Spleen (tissue), 13 donors: ENCODE measurements at regions of chr12 and their contacts with region 1.

Region 1: GRCh38 chr12:97308576-97309198 is 153.9 kb upstream of the RMST start:
- DNase-seq: no peak
- H3K4me3 ChIP-seq: no peak overlapping the region
- H3K27ac ChIP-seq: no peak overlapping the region
- H3K4me1 ChIP-seq: peaks cover 0 to 16% (median 3%) of the 10 kb centered on the region in 6 donors
- H3K27me3 ChIP-seq: peaks cover 0 to 15% (median 0%) of the 10 kb centered on the region in 7 donors
- CTCF ChIP-seq: peak; percentile 19 to 74 (median 68)
- POLR2A ChIP-seq: no peak

Region 2: DNA sequence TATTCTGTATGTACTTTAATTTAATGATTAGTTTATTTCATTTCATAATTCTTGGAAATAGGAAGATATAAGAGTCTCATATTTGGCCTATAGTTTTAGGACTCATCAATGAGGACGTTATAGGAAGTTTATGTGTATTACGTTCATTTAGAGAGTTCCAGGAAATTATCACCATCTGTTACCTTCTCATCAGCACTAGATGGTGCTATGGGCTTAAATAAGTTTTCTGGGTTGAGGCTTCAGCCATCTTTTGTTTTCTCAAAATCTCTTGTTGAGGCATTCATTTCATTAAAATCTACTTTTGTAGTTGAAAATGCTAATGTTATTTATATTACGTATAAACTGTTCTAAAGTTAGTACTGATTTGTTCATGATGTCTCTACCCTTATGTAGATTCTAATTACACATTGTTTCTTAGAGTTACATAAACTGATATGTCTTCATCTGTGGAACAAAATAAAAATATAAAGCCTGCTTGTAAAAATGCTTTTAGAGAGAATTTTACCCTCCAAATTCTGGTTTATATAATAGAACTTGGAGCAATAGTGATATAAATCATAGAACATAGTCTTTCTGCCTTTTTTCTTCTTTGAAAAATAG is 730.1 kb before region 1 on chr12:
- intact Hi-C with region 1: loop called (anchors 5 kb)
- DNase-seq: no peak
- H3K4me3 ChIP-seq: no peak overlapping the region
- H3K27ac ChIP-seq: no peak overlapping the region
- H3K4me1 ChIP-seq: peaks cover 0 to 10% (median 3%) of the 10 kb centered on the region in 6 donors
- H3K27me3 ChIP-seq: no peaks in the 10 kb centered on the region
- CTCF ChIP-seq: peak; percentile 27 to 73 (median 57)
- POLR2A ChIP-seq: no peak

Region 3: GRCh38 chr12:96985480-96986362 is 323.0 kb before region 1 on chr12:
- intact Hi-C with region 1: loop called (anchors 5 kb)
- DNase-seq: peak; percentile 83
- H3K4me3 ChIP-seq: peak overlapping the region; percentile 13 to 66 (median 38)
- H3K27ac ChIP-seq: no peak overlapping the region
- H3K4me1 ChIP-seq: peaks cover 0 to 15% (median 11%) of the 10 kb centered on the region in 6 donors
- H3K27me3 ChIP-seq: peaks cover 0 to 38% (median 10%) of the 10 kb centered on the region in 7 donors
- CTCF ChIP-seq: peak in 9 of 11 experiments; percentile 4 to 90 (median 83)
- POLR2A ChIP-seq: no peak

Region 4: DNA sequence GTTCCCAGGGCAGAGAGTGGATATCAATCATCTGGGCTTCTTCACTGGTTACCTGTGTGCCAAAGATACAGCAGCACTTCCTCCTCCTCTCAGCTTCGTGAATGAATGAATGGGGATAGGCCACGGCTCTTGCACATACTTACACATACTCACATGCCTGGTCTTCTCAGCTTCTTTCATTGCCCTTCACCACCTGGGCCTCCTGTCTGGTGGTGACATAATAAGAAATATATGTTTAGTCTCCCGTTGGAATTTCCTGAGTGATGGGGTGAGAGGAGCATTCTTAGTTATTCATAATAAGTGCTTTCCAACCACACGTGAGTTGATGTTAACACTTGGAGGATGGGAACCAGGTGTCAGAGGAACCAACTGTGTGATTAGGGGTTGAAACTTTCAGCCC is 114.1 kb before region 1 on chr12:
- intact Hi-C with region 1: no loop called
- DNase-seq: no peak
- H3K4me3 ChIP-seq: no peak overlapping the region
- H3K27ac ChIP-seq: no peak overlapping the region
- H3K4me1 ChIP-seq: no peaks in the 10 kb centered on the region
- H3K27me3 ChIP-seq: no peaks in the 10 kb centered on the region
- CTCF ChIP-seq: no peak
- POLR2A ChIP-seq: no peak

Region 5: DNA sequence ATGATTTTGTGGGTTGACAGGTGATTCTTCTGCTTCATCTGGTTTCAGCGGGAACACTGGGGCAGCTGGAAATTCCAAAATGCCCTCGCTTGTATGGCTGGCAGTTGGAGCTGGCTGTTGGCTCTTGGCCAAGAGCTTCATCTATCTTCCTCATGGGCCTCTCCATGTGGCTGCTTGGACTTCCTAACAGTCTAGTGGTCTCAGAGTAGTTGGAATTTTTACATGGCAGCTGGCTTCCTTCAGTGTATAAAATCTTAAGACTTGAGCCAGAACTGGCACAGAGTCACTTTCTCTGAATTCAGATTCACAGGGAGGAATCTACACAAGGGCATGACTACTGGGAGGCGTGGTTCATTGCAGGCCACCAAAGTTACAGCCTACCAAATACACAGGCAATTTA is 51.0 kb before region 1 on chr12:
- intact Hi-C with region 1: no loop called
- DNase-seq: no peak
- H3K4me3 ChIP-seq: no peak overlapping the region
- H3K27ac ChIP-seq: no peak overlapping the region
- H3K4me1 ChIP-seq: no peaks in the 10 kb centered on the region
- H3K27me3 ChIP-seq: no peaks in the 10 kb centered on the region
- CTCF ChIP-seq: no peak
- POLR2A ChIP-seq: no peak

Region 6: GRCh38 chr12:98397316-98398105 is 1088.8 kb after region 1 on chr12:
- intact Hi-C with region 1: loop called (anchors 10 kb)
- DNase-seq: peak; percentile 91
- H3K4me3 ChIP-seq: peak overlapping the region; percentile 11 to 65 (median 33)
- H3K27ac ChIP-seq: peak overlapping the region in 5 of 8 donors; percentile 1 to 52 (median 43)
- H3K4me1 ChIP-seq: peaks cover 0 to 40% (median 29%) of the 10 kb centered on the region in 6 donors
- H3K27me3 ChIP-seq: no peaks in the 10 kb centered on the region
- CTCF ChIP-seq: peak; percentile 68 to 94 (median 90)
- POLR2A ChIP-seq: no peak